ENCODE measurements at regions of chr16 and their contacts with region 1.

Region 1: DNA sequence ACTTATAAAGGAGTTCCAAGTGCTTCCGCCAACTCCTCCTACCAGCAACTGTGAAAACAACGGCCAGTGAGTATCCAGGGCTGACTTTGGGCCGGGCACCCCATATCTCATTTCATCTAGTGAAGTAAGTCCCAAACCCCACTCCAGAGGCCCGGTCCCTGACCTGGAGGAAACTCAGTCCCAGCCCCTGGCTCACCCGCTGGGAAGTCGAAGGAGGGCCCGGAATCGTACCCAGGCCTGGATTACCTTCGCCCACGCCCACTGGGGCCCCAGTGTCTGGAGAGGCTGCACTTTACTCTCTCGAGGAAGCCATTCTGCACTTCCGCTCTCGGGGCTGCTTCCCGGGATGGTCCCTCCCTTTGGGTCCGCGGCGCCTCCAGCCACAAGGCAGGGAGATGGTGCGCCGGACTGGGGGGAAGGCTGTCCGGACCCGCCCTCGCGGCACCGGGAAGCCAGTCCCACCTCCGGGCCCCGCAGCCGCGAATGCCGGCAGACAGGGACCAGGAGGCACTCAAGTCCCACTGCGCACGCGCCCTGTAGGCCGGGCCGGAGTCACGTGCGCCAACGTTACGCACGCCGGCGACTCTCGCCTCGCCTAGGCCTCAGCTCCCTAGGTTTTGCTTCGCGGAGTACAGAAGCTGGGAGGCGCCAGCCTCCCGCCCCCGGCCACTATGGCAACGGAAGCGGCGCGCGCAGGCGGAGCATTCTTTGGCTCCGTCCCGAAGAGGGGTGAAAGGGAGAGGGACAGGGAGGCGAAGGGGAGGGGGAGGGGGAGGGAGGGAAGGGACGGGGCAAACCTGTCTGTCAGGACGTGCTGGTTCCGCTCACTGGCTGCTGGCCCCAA is at the start of gene CMTR2:
- DNase-seq: peak; percentile 99
- H3K4me3 ChIP-seq: peak within 1 kb of the TSS; percentile 87
- H3K4me3 Mint-ChIP-seq: peak within 1 kb of the TSS; percentile 68
- H3K27ac Mint-ChIP-seq: peak within 1 kb of the TSS; percentile 80
- H3K4me1 ChIP-seq: peaks cover 7% of the 10 kb centered on the region
- H3K4me1 Mint-ChIP-seq: peaks cover 10% of the 10 kb centered on the region
- H3K27me3 ChIP-seq: no peaks in the 10 kb centered on the region
- H3K27me3 Mint-ChIP-seq: peaks cover 4% of the 10 kb centered on the region
- CTCF ChIP-seq: peak in 1 of 2 experiments; percentile 26
- total RNA-seq, gene CMTR2: 18.5 and 19.4 TPM in 2 replicates

Region 2: DNA sequence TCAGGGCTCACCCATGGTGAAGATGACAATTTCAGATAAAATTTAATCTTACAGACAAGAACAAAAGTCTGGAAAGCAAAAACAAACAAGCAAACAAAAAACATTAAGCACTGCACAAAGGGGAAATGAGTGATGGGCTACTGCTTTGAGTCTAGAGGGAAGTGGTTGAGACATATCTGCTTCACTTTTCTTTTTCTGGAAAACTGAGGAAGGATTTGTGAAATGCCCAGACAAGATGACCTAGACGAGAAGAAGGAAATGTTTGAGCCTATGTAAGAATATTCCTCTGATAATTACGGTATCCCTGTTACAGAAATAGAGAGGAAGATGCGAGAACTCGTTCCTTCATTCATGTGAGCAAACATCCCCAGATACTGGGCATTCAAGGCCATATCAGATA is 47.1 kb before region 1 on chr16:
- CTCF ChIA-PET with region 1: no interaction called
- POLR2A ChIA-PET with region 1: no interaction called
- intact Hi-C with region 1: loop called (anchors 2 kb)
- DNase-seq: no peak
- H3K4me3 ChIP-seq: no peak overlapping the region
- H3K4me3 Mint-ChIP-seq: no peak overlapping the region
- H3K27ac Mint-ChIP-seq: no peak overlapping the region
- H3K4me1 ChIP-seq: peaks cover 20% of the 10 kb centered on the region
- H3K4me1 Mint-ChIP-seq: peaks cover 14% of the 10 kb centered on the region
- H3K27me3 ChIP-seq: no peaks in the 10 kb centered on the region
- H3K27me3 Mint-ChIP-seq: peaks cover 3% of the 10 kb centered on the region
- CTCF ChIP-seq: no peak

Region 3: GRCh38 chr16:71311553-71312158 is 22.5 kb after region 1 on chr16:
- CTCF ChIA-PET with region 1: interaction called, 10 read pairs
- POLR2A ChIA-PET with region 1: interaction called, 4 read pairs
- intact Hi-C with region 1: no loop called
- DNase-seq: peak in 1 of 2 experiments; percentile 54
- H3K4me3 ChIP-seq: no peak overlapping the region
- H3K4me3 Mint-ChIP-seq: no peak overlapping the region
- H3K27ac Mint-ChIP-seq: no peak overlapping the region
- H3K4me1 ChIP-seq: no peaks in the 10 kb centered on the region
- H3K4me1 Mint-ChIP-seq: no peaks in the 10 kb centered on the region
- H3K27me3 ChIP-seq: no peaks in the 10 kb centered on the region; the same call in 1 of the 2 replicates
- H3K27me3 Mint-ChIP-seq: peaks cover 9% of the 10 kb centered on the region
- CTCF ChIP-seq: peak; percentile 80 to 95

Region 4: GRCh38 chr16:71467810-71468209 is 178.7 kb after region 1 on chr16:
- CTCF ChIA-PET with region 1: no interaction called
- POLR2A ChIA-PET with region 1: no interaction called
- intact Hi-C with region 1: no loop called
- DNase-seq: peak; percentile 50 to 62
- H3K4me3 ChIP-seq: no peak overlapping the region
- H3K4me3 Mint-ChIP-seq: no peak overlapping the region
- H3K27ac Mint-ChIP-seq: no peak overlapping the region
- H3K4me1 ChIP-seq: no peaks in the 10 kb centered on the region
- H3K4me1 Mint-ChIP-seq: no peaks in the 10 kb centered on the region
- H3K27me3 ChIP-seq: no peaks in the 10 kb centered on the region
- H3K27me3 Mint-ChIP-seq: no peaks in the 10 kb centered on the region
- CTCF ChIP-seq: no peak

Region 5: GRCh38 chr16:71564155-71564967 is 275.2 kb after region 1 on chr16:
- CTCF ChIA-PET with region 1: no interaction called
- POLR2A ChIA-PET with region 1: no interaction called
- intact Hi-C with region 1: no loop called
- DNase-seq: no peak
- H3K4me3 ChIP-seq: peak overlapping the region; percentile 44
- H3K4me3 Mint-ChIP-seq: peak overlapping the region; percentile 94
- H3K27ac Mint-ChIP-seq: peak overlapping the region; percentile 97
- H3K4me1 ChIP-seq: peaks cover 8% of the 10 kb centered on the region; the same call in 1 of the 2 replicates
- H3K4me1 Mint-ChIP-seq: peaks cover 20% of the 10 kb centered on the region
- H3K27me3 ChIP-seq: no peaks in the 10 kb centered on the region
- H3K27me3 Mint-ChIP-seq: no peaks in the 10 kb centered on the region
- CTCF ChIP-seq: no peak

Measured in Caco-2 (cell line).